ENCODE measurements at regions of chr10 and their contacts with region 1.

Region 1: DNA sequence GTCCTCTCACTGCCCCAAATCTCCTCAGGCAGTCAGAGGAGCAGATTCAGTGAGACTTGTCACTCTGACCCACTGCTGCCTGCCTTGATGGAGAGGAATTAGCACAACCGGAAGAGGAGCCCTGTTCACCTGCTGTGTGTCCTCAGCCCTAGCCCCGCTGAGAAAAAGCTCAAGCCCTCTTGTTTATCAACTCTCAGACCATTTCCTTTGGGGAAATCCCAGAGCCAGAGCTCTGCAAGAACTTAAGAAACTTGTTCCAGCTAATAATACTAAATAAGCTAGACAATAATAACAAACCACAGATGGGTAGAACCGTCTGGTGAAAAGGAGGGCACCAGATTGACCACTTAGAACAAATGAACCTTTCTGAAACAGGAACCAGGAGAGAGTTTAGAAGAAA is 37.7 kb upstream of the ITGB1 start:
- DNase-seq: peak; percentile 85
- H3K4me3 ChIP-seq: peak overlapping the region; percentile 33
- H3K27ac ChIP-seq: peak overlapping the region; percentile 80
- H3K4me1 ChIP-seq: peaks cover 39% of the 10 kb centered on the region
- CTCF ChIP-seq: no peak

Region 2: GRCh38 chr10:32911285-32912016 is 84.3 kb before region 1 on chr10:
- CTCF ChIA-PET with region 1: no interaction called
- POLR2A ChIA-PET with region 1: interaction called, 3 read pairs
- intact Hi-C with region 1: loop called (anchors 5 kb)
- DNase-seq: no peak
- H3K4me3 ChIP-seq: no peak overlapping the region
- H3K27ac ChIP-seq: no peak overlapping the region
- H3K4me1 ChIP-seq: no peaks in the 10 kb centered on the region
- CTCF ChIP-seq: no peak

Region 3: DNA sequence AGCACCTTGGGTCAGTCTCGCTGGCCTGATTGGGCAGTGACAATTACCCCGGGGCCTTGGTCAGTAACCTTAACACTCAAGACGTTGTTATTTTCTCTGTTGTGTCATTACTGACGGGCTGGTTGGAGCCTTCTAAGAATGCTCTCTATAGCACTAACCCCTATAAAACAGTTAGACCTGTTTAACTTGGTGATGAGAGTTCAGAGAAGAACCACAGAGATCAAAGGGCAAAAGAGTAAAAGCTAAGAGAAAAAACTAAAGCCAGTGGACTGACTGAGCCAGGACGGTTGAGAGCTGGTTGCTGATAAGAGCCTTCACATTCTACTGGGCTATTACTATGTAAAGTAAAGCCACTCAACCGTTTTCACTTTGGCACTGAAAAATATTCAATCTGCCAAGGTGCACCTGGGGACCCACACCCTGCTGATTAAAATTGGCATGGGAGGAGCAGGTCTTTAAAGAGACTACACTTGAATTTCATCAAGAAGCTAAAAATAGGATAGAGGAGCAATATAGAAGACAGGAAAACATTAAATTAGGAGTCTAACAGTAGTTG is 24.1 kb before region 1 on chr10:
- CTCF ChIA-PET with region 1: interaction called, 3 read pairs
- POLR2A ChIA-PET with region 1: interaction called, 21 read pairs
- intact Hi-C with region 1: no loop called
- DNase-seq: peak; percentile 92
- H3K4me3 ChIP-seq: peak overlapping the region; percentile 59
- H3K27ac ChIP-seq: peak overlapping the region; percentile 99
- H3K4me1 ChIP-seq: peaks cover 71% of the 10 kb centered on the region
- CTCF ChIP-seq: no peak

Region 4: GRCh38 chr10:32980558-32981468 is 14.9 kb before region 1 on chr10:
- CTCF ChIA-PET with region 1: interaction called, 7 read pairs
- POLR2A ChIA-PET with region 1: interaction called, 35 read pairs
- intact Hi-C with region 1: no loop called
- DNase-seq: peak; percentile 90
- H3K4me3 ChIP-seq: peak overlapping the region; percentile 63
- H3K27ac ChIP-seq: peak overlapping the region; percentile 63
- H3K4me1 ChIP-seq: peaks cover 62% of the 10 kb centered on the region
- CTCF ChIP-seq: 0 out of 2 replicates have a peak, but pooled peaks have one; percentile 25

Region 5: DNA sequence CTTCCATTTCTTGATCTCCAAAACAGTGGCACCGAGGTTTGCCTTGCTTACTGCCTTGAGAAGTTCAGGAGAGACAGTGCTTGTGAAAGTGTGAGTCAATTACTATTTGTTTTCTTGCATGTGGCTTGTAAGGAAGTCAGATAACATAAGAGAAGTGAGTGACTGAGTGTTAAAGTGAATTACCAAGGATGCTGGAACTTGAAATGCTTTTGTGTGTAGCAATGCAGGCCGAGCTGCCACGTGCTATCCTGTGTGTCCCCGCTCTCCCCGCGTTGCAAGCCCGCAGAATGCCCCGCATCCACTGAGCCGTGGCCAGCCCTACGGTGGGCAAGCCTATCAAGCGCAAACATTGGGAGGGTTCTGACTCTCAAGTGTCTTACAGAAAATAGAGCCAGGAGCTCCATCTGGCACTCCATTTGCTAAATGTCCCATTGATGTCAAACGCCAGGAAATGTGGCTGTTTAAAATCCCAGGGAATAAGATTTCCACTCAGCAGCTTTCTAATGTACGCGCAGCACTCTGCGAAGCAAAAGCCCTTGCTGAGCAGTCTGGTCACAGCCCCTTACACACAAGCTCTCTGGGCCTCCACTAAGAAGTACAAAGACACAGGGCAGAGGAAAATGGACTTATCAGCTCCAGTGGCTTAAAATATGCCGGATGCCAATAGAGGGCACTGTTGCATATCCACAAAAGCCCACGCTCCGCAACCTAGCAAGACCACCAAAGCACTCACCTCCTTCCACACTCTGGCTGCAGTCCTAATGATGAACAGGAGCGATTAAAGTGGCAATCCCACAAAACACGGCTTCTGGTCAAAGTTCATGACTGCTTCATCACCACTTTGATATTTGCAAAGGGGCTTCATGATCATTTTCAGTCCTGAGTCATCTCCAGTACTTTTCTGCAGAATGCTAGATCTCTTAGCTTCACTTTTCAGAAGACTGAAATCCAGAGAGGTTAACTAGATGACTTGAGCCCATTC is 120.3 kb after region 1 on chr10:
- CTCF ChIA-PET with region 1: no interaction called
- POLR2A ChIA-PET with region 1: interaction called, 3 read pairs
- intact Hi-C with region 1: loop called (anchors 5 kb)
- DNase-seq: peak; percentile 55
- H3K4me3 ChIP-seq: no peak overlapping the region
- H3K27ac ChIP-seq: peak overlapping the region; percentile 95
- H3K4me1 ChIP-seq: peaks cover 58% of the 10 kb centered on the region
- CTCF ChIP-seq: peak; percentile 82

Measured in OCI-LY7 (cell line).